Cardiac septum (tissue), 1 donor: ENCODE measurements at regions of chr2 and their contacts with region 1.

Region 1: GRCh38 chr2:25252281-25253105 is 84.1 kb upstream of the POMC start:
- DNase-seq: no peak

Region 2: GRCh38 chr2:25276569-25277465 is 24.3 kb after region 1 on chr2:
- intact Hi-C with region 1: loop called (anchors 2 kb)
- DNase-seq: peak; percentile 86